Activated naive CD4-positive, alpha-beta T cell treated with anti-CD3 and anti-CD28 coated beads for 36 hours (primary cell): ENCODE measurements at regions of chr2 and their contacts with region 1.

Region 1: GRCh38 chr2:54723131-54723995 is at the start of gene EML6:
- DNase-seq: peak; percentile 99
- H3K4me3 Mint-ChIP-seq: peak within 1 kb of the TSS; percentile 90
- H3K27ac Mint-ChIP-seq: no peak within 1 kb of the TSS
- H3K4me1 Mint-ChIP-seq: peaks cover 13% of the 10 kb centered on the region
- H3K27me3 Mint-ChIP-seq: peaks cover 32% of the 10 kb centered on the region
- total RNA-seq, gene EML6: 0.38 to 0.49 TPM

Region 2: DNA sequence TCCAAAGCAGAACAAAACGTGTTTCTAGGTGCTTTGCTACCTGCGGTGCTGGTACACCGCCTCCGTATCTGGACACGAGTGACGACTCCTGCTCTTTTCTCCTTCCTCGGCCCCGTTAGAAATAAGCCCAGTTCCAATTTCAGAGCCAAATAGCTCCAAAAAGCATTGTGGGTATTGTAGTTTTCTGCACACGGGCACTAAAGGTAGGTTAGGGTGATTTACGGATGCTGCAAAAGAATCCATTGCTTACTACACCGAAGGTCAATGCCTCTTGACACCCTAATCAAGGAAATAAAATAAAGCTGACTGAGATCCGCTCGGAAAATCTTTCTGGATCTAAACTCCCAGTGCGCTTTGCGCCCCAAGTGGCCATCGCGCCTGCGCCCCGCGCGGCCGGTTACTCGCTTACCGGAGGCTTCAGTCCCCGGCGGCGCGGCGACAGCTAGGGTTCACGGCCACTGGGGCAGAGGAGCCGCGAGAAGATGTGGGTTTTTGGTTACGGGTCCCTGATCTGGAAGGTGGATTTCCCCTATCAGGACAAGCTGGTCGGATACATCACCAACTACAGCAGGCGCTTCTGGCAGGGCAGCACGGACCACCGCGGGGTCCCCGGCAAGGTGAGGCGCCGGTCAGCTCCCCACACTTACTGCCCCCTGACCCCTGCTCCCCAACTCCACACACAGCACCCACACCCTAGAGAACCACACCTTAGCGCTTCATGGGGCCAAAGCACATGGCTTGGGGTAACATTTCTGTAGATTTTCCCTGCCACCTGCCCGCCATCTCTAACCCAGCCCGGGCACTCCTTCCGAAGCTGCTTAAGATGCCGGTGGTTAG is 955.7 kb before region 1 on chr2 and contains the start of gene CHAC2:
- CTCF ChIA-PET with region 1: no interaction called
- intact Hi-C with region 1: loop called (anchors 1 kb)
- DNase-seq: peak; percentile 91
- H3K4me3 Mint-ChIP-seq: peak within 1 kb of the TSS; percentile 94
- H3K27ac Mint-ChIP-seq: peak within 1 kb of the TSS; percentile 93
- H3K4me1 Mint-ChIP-seq: peaks cover 26% of the 10 kb centered on the region
- H3K27me3 Mint-ChIP-seq: no peaks in the 10 kb centered on the region
- total RNA-seq, gene CHAC2: 11.5 to 12.4 TPM

Region 3: GRCh38 chr2:54330162-54330925 is 393.0 kb before region 1 on chr2:
- CTCF ChIA-PET with region 1: no interaction called
- intact Hi-C with region 1: loop called (anchors 1 kb)
- DNase-seq: peak; percentile 93
- H3K4me3 Mint-ChIP-seq: peak overlapping the region; percentile 83
- H3K27ac Mint-ChIP-seq: no peak overlapping the region
- H3K4me1 Mint-ChIP-seq: peaks cover 17% of the 10 kb centered on the region
- H3K27me3 Mint-ChIP-seq: peaks cover 6% of the 10 kb centered on the region

Region 4: GRCh38 chr2:54570925-54571694 is 152.3 kb before region 1 on chr2:
- CTCF ChIA-PET with region 1: no interaction called
- intact Hi-C with region 1: loop called (anchors 1 kb)
- DNase-seq: peak; percentile 93
- H3K4me3 Mint-ChIP-seq: peak overlapping the region; percentile 48
- H3K27ac Mint-ChIP-seq: peak overlapping the region; percentile 91
- H3K4me1 Mint-ChIP-seq: peaks cover 87% of the 10 kb centered on the region
- H3K27me3 Mint-ChIP-seq: no peaks in the 10 kb centered on the region

Region 5: GRCh38 chr2:54741250-54741649 is 17.9 kb after region 1 on chr2:
- CTCF ChIA-PET with region 1: no interaction called
- intact Hi-C with region 1: no loop called
- DNase-seq: no peak
- H3K4me3 Mint-ChIP-seq: no peak overlapping the region
- H3K27ac Mint-ChIP-seq: no peak overlapping the region
- H3K4me1 Mint-ChIP-seq: no peaks in the 10 kb centered on the region
- H3K27me3 Mint-ChIP-seq: no peaks in the 10 kb centered on the region

Region 6: DNA sequence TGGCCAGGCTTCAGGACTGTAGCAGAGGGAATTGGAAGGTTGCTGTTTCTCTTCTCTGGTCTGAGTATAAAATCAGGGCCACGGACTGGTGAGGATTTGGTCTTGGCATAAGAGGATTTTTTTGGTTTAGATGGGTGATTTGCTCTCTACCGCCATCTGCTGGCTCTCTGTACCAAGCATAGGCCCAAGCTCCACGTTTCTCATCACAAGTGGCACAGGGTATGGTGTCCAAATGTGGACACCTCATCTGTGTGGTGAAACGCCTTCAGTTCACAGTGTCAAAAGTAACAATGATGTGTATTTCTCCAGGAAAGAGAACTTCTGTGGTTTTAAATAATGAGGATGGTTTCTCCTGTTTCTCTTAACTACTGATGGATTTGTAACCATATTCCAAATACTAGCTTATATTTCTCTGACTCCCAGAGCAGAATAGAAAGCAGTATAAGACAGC is 115.2 kb after region 1 on chr2:
- CTCF ChIA-PET with region 1: interaction called, 4 read pairs
- intact Hi-C with region 1: loop called (anchors 1 kb)
- DNase-seq: peak; percentile 80
- H3K4me3 Mint-ChIP-seq: no peak overlapping the region
- H3K27ac Mint-ChIP-seq: no peak overlapping the region
- H3K4me1 Mint-ChIP-seq: no peaks in the 10 kb centered on the region
- H3K27me3 Mint-ChIP-seq: no peaks in the 10 kb centered on the region

Region 7: DNA sequence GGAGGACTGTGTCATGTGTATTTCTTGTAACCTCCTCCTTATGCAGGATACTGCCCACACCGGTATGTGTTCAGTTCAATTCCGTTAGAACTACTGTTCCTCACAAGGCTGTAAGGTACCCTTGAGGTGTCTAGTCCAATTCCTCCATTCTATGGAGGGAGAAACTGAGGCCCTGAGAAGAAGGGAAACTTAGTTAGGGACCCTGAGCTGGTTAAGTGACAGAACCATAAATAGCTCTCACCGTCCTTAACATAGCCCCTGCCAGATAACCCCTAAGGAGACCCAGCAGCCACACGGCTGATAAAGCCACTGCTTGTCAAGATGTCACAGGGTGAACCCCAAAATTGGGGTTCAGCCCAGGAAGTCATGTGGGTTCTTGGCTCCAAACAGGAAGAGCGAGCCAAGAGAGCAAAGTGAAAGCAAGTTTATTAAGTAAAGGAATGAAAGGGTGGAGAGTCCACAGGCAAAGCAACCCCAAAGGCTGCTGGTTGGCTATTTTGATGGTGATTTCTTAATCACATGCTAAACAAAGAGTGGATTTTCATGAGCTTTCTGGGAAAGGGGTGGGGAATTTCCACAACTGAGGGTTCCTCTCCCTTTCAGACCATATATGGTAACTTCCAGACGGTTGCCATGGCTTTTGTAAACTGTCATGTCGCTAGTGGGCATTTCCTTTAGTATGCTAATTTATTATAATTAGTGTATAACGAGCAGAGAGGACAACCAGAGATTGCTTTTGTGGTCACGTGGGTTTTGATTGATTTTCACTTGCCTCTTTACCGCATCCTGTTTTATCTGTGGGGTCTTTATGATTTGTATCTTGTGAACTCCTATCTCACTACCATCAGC is 410.3 kb after region 1 on chr2:
- CTCF ChIA-PET with region 1: no interaction called
- intact Hi-C with region 1: loop called (anchors 1 kb)
- DNase-seq: peak; percentile 80
- H3K4me3 Mint-ChIP-seq: peak overlapping the region; percentile 75
- H3K27ac Mint-ChIP-seq: peak overlapping the region; percentile 95
- H3K4me1 Mint-ChIP-seq: peaks cover 25% of the 10 kb centered on the region
- H3K27me3 Mint-ChIP-seq: no peaks in the 10 kb centered on the region

Region 8: DNA sequence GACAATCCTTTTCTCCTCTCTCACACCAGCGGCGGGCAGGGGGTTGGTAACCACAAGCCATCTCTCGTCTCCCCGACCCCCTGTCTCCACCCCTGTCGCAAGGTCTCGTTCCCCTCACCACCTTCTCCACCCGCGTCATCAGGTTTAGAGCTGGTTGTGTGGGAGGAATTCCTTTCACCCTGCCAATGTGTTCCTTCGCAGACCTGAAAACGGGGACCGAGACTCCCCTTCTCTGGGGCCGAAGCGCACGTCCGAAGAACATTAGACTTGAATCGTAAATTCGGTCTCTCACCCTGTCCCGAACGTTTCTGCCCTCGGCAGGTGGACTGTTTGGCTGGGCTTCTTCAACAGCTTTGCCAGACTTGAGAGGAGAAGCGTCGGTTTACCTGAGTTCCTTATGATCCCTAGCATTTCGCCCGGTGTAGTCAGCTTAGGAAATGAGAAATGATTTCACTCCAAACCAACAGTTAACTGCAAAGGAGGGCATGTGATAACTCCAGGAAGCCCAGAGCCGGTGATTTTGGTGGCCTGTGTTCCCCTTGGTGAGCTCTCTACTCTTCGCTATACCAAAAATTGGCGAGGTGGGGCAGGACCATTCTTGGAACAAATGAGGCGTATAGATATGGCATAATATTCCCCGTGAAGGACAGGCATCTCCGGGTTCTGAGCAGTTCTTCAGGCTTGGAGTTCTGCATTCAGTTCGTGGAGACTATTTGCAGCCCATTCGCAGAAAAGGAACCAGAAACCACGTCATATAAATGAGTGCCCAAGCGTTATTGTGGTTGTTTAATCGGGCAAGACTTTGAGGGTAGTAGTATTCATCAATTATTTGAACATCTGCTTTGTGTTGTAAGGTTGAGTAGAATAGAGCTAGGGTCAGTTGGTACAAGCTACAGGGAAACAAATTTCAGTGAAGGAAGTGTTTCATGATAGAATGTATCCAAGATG is 796.8 kb after region 1 on chr2:
- CTCF ChIA-PET with region 1: no interaction called
- intact Hi-C with region 1: loop called (anchors 5 kb)
- DNase-seq: peak; percentile 45
- H3K4me3 Mint-ChIP-seq: peak overlapping the region; percentile 99
- H3K27ac Mint-ChIP-seq: peak overlapping the region; percentile 96
- H3K4me1 Mint-ChIP-seq: peaks cover 14% of the 10 kb centered on the region
- H3K27me3 Mint-ChIP-seq: no peaks in the 10 kb centered on the region